T-cell (primary cell): ENCODE measurements at regions of chr11 and their contacts with region 1.

Region 1: GRCh38 chr11:3920148-3920852 is 64.8 kb downstream of the STIM1 start:
- DNase-seq: peak in 32 of 35 experiments; percentile 20 to 74 (median 48)
- ATAC-seq: peak; percentile 74 to 94 (median 88)
- H3K4me3 ChIP-seq: no peak overlapping the region
- H3K4me3 Mint-ChIP-seq: peak overlapping the region in 2 of 3 donors; percentile 32 to 42
- H3K27ac ChIP-seq: peak overlapping the region; percentile 42
- H3K27ac Mint-ChIP-seq: peak overlapping the region; percentile 39 to 82
- H3K4me1 ChIP-seq: peaks cover 14 to 46% of the 10 kb centered on the region in 2 experiments
- H3K4me1 Mint-ChIP-seq: peaks cover 49 to 68% (median 63%) of the 10 kb centered on the region in 3 donors
- H3K27me3 ChIP-seq: no peaks in the 10 kb centered on the region
- H3K27me3 Mint-ChIP-seq: no peaks in the 10 kb centered on the region

Region 2: DNA sequence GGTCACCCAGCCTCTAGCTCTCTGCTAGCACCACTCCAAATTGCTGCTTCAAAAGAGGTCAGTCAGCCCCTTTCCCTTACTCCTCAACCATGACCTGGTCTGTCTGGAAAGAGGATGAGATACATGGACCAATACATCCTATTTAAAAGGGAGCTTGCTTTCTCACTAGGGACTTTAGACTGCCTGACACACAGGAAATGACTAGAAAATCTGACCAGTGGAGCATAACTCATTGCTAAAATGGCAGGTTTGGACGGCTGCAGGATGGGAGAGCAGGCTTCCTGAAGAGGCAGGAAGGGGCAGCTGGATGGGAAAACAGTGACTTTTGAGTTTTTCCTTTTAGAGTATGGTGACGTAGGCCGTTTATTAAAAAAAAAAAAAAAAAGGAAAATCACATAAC is 39.6 kb before region 1 on chr11:
- CTCF ChIA-PET with region 1: no interaction called
- POLR2A ChIA-PET with region 1: interaction called in 1 of 2 experiments, 11 read pairs
- DNase-seq: no peak
- ATAC-seq: no peak
- H3K4me3 ChIP-seq: no peak overlapping the region
- H3K4me3 Mint-ChIP-seq: peak overlapping the region in 2 of 3 donors; percentile 21 to 44
- H3K27ac ChIP-seq: peak overlapping the region; percentile 48
- H3K27ac Mint-ChIP-seq: peak overlapping the region; percentile 79 to 85
- H3K4me1 ChIP-seq: peaks cover 24 to 30% of the 10 kb centered on the region in 2 experiments
- H3K4me1 Mint-ChIP-seq: peaks cover 75 to 86% (median 78%) of the 10 kb centered on the region in 3 donors
- H3K27me3 ChIP-seq: no peaks in the 10 kb centered on the region
- H3K27me3 Mint-ChIP-seq: no peaks in the 10 kb centered on the region